Endothelial cell of umbilical vein (primary cell): ENCODE measurements at regions of chr7 and their contacts with region 1.

Region 1: DNA sequence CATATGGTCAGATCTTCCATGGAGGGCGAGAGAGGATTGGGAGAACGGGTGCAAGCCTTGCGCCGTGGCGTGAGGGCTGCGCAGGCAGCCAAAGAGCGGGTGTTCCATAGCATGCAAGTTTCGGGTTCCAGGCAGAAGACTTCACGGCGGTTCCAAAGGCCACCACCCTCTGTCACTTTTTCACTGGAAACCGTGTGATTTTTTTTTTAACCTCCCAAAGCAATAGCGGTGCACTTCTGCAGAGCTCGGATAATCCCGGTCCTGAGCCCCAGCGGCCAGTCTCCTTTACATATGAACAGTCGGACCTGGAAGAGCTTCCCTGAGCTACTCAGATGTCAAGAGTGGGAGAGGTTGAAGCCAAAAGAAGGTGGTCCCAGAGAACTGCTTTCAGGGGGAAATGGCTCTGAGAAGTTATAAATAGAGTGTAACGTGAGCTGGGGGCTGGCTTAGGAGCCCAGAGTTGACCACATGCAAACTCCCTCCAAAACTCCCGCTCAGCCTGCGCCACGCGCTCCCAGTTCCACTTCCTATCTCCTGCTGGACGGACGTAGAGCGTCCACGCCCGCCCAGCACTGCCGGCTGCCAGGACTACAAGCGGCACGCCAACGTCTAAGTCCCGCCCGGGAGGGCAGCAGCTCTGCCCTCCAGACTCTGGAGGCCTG is at the start of gene MEOX2:
- DNase-seq: peak; percentile 87
- H3K4me3 ChIP-seq: peak within 1 kb of the TSS; percentile 61 to 95 (median 80)
- H3K27ac ChIP-seq: peak within 1 kb of the TSS; percentile 70
- H3K4me1 ChIP-seq: peaks cover 22% of the 10 kb centered on the region
- H3K27me3 ChIP-seq: no peaks in the 10 kb centered on the region
- CTCF ChIP-seq: no peak
- POLR2A ChIP-seq: peak; percentile 69
- total RNA-seq, gene MEOX2: 45.1 and 47.8 TPM in 2 replicates

Region 2: DNA sequence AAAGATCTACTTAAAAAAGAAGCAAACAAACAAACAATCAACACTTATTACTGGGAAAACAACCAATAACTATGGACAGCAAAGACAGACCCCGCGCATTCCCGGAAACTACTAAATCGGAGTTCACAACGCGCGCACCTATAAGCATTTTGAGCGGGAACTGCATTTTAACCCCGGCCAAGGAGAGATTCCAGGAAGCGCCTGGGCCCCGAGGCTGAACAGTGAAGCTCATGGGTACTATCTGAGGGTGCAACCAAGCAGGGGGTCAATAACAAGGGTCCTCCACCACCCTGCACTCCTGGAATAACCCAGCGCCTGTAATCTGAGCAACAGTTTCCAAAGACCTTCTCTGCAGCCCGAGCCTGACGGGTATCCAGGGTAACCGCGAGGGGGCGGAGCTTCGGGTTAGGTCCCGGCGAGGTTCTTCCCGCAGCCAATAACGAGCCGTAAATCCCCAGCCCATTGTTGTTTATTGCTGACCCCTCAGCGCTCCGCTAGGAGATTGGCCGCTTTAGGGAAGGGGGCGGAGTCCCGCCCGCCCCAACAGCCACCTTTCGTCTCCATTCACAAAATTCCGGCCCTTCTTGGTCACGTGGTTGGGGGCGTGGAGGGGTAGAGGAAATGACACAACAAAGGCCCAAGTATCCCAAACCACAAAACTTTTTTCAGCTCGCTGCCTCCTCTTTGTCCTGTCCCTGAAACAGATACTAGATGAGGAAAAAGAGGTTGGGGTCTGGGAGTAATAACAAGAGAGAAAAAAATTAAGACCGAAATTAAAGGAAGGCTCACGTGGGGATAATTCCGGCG is 1695.2 kb before region 1 on chr7:
- CTCF ChIA-PET with region 1: no interaction called
- POLR2A ChIA-PET with region 1: no interaction called
- dilution Hi-C with region 1: no loop called
- intact Hi-C with region 1: loop called (anchors 10 kb)
- DNase-seq: peak; percentile 98
- H3K4me3 ChIP-seq: peak overlapping the region; percentile 79 to 98 (median 96)
- H3K27ac ChIP-seq: peak overlapping the region; percentile 88
- H3K4me1 ChIP-seq: peaks cover 16% of the 10 kb centered on the region
- H3K27me3 ChIP-seq: no peaks in the 10 kb centered on the region
- CTCF ChIP-seq: no peak
- POLR2A ChIP-seq: no peak

Region 3: GRCh38 chr7:14457568-14458453 is 1228.6 kb before region 1 on chr7:
- CTCF ChIA-PET with region 1: no interaction called
- POLR2A ChIA-PET with region 1: no interaction called
- dilution Hi-C with region 1: no loop called
- intact Hi-C with region 1: no loop called
- DNase-seq: peak; percentile 79
- H3K4me3 ChIP-seq: no peak overlapping the region
- H3K27ac ChIP-seq: no peak overlapping the region
- H3K4me1 ChIP-seq: no peaks in the 10 kb centered on the region
- H3K27me3 ChIP-seq: no peaks in the 10 kb centered on the region
- CTCF ChIP-seq: peak; percentile 71 to 73
- POLR2A ChIP-seq: no peak

Region 4: GRCh38 chr7:15326044-15326644 is 360.3 kb before region 1 on chr7:
- CTCF ChIA-PET with region 1: interaction called, 4 read pairs
- POLR2A ChIA-PET with region 1: no interaction called
- dilution Hi-C with region 1: no loop called
- intact Hi-C with region 1: loop called (anchors 2 kb)
- DNase-seq: peak; percentile 72
- H3K4me3 ChIP-seq: no peak overlapping the region
- H3K27ac ChIP-seq: no peak overlapping the region
- H3K4me1 ChIP-seq: no peaks in the 10 kb centered on the region
- H3K27me3 ChIP-seq: no peaks in the 10 kb centered on the region
- CTCF ChIP-seq: peak; percentile 33 to 45
- POLR2A ChIP-seq: no peak

Region 5: GRCh38 chr7:15720849-15721471 is 34.5 kb after region 1 on chr7:
- CTCF ChIA-PET with region 1: interaction called, 107 read pairs
- POLR2A ChIA-PET with region 1: interaction called, 3 read pairs
- dilution Hi-C with region 1: no loop called
- intact Hi-C with region 1: loop called (anchors 1 kb)
- DNase-seq: peak; percentile 84
- H3K4me3 ChIP-seq: no peak overlapping the region
- H3K27ac ChIP-seq: peak overlapping the region; percentile 11
- H3K4me1 ChIP-seq: peaks cover 17% of the 10 kb centered on the region
- H3K27me3 ChIP-seq: no peaks in the 10 kb centered on the region
- CTCF ChIP-seq: peak; percentile 50 to 52
- POLR2A ChIP-seq: no peak

Region 6: DNA sequence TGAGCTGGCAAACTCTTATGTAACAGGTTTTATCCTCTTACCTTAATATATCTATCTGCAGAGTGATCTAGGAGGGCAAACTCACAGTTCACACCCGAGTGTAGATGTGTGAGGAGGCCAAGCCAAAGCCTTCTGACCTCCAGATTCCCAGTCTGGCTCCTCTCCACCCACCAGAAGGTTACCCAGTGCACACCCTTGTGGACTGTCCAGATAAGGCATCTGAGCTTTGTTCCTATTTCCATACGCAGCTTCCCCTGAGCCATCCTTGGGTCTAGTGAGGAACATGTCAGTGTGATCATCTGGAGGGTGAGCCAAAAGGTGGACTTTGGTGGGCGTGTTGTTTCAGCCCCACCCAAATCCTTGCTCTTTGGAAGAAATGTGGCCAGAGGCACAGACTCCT is 203.1 kb after region 1 on chr7:
- CTCF ChIA-PET with region 1: interaction called, 3 read pairs
- POLR2A ChIA-PET with region 1: no interaction called
- dilution Hi-C with region 1: no loop called
- intact Hi-C with region 1: loop called (anchors 1 kb)
- DNase-seq: peak; percentile 29
- H3K4me3 ChIP-seq: no peak overlapping the region
- H3K27ac ChIP-seq: no peak overlapping the region
- H3K4me1 ChIP-seq: no peaks in the 10 kb centered on the region
- H3K27me3 ChIP-seq: no peaks in the 10 kb centered on the region
- CTCF ChIP-seq: peak; percentile 21 to 24
- POLR2A ChIP-seq: no peak

Region 7: DNA sequence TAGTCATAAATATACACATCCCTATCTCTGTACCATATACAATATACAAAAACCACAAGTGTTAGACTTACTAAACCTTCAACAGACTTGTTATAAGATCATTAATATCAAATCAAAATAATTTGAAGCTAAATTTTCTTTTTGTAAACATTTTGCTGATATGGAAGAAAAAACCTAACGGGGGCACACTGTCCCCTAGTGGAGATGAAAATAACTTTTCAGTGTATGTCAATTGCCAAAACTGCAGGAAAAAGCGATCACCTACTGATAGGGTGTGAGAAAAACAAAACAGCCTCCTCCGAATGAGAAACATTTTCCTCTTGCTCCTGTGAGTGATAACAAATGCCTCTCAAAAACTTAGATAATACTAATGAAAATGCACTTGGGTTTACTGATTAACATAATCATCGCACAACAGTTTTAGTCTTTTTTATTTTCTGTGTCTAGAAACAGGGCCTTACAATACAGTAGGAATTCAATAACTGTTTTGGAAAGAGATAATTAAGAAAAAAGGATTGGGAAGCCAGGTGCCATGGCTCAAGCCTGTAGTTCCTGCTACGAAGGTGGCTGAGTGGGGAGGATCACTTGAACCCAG is 412.3 kb after region 1 on chr7:
- CTCF ChIA-PET with region 1: interaction called, 7 read pairs
- POLR2A ChIA-PET with region 1: no interaction called
- dilution Hi-C with region 1: no loop called
- intact Hi-C with region 1: loop called (anchors 1 kb)
- DNase-seq: peak; percentile 85
- H3K4me3 ChIP-seq: no peak overlapping the region
- H3K27ac ChIP-seq: peak overlapping the region; percentile 86
- H3K4me1 ChIP-seq: peaks cover 22% of the 10 kb centered on the region
- H3K27me3 ChIP-seq: no peaks in the 10 kb centered on the region
- CTCF ChIP-seq: peak; percentile 64 to 70
- POLR2A ChIP-seq: no peak